ENCODE measurements at regions of chr15 and their contacts with region 1.

Region 1: GRCh38 chr15:22838292-22839042 is at the start of gene NIPA2:
- DNase-seq: peak; percentile 99
- H3K4me3 Mint-ChIP-seq: peak within 1 kb of the TSS; percentile 84
- H3K27ac Mint-ChIP-seq: peak within 1 kb of the TSS; percentile 82
- H3K4me1 Mint-ChIP-seq: peaks cover 28% of the 10 kb centered on the region
- H3K27me3 Mint-ChIP-seq: no peaks in the 10 kb centered on the region
- total RNA-seq, gene NIPA2: 47.1 to 49.9 TPM

Region 2: GRCh38 chr15:22786868-22787698 is 51.4 kb before region 1 on chr15:
- CTCF ChIA-PET with region 1: interaction called, 3 read pairs
- POLR2A ChIA-PET with region 1: interaction called, 22 read pairs
- DNase-seq: no peak
- H3K4me3 Mint-ChIP-seq: peak overlapping the region; percentile 79
- H3K27ac Mint-ChIP-seq: peak overlapping the region; percentile 65
- H3K4me1 Mint-ChIP-seq: peaks cover 35% of the 10 kb centered on the region
- H3K27me3 Mint-ChIP-seq: no peaks in the 10 kb centered on the region

Region 3: GRCh38 chr15:22795206-22796063 is 43.0 kb before region 1 on chr15:
- CTCF ChIA-PET with region 1: interaction called, 6 read pairs
- POLR2A ChIA-PET with region 1: interaction called, 13 read pairs
- DNase-seq: no peak
- H3K4me3 Mint-ChIP-seq: no peak overlapping the region
- H3K27ac Mint-ChIP-seq: no peak overlapping the region
- H3K4me1 Mint-ChIP-seq: peaks cover 54% of the 10 kb centered on the region
- H3K27me3 Mint-ChIP-seq: no peaks in the 10 kb centered on the region

Region 4: GRCh38 chr15:22949074-22949547 is 110.6 kb after region 1 on chr15:
- CTCF ChIA-PET with region 1: no interaction called
- POLR2A ChIA-PET with region 1: no interaction called
- DNase-seq: no peak
- H3K4me3 Mint-ChIP-seq: no peak overlapping the region
- H3K27ac Mint-ChIP-seq: no peak overlapping the region
- H3K4me1 Mint-ChIP-seq: peaks cover 15% of the 10 kb centered on the region
- H3K27me3 Mint-ChIP-seq: no peaks in the 10 kb centered on the region

Region 5: DNA sequence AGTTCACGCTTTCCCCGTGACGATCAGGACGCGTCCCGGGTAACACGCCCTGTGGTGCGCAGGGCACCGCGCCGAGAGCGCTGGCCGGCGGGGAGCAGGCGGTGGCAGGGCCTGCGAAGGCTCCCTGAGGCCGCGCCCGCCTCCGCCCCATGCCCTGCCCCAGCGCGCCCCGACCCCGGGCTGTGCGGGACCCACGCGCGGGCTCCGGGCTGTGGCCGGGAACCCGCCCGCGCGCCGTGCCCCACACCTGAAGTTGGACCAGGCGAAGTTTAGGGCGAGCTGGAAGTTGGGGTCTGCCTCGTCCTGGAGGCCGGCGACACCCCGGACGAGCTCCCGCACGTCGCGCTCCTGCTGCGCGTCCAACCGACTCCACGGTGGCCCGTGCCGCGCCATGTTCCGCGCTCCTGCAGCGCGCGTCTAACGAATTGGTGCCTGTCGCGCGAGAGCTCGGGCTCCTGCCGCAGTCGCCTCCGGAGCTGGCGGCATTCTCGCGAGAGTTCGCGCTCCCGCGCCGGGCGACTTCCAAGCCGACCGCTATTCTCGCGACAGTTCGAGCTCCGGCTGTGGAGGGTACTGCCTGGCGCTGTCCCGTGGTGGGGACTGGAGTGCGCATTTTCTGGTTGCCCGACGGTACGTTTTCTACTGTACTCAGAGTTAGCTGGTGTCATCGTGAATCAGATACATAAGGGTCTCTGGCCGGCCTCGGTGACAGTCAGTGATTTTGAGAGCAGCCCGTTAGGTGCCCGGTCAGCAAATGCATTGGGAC is 200.9 kb after region 1 on chr15 and contains the start of gene TUBGCP5:
- CTCF ChIA-PET with region 1: interaction called, 3 read pairs
- POLR2A ChIA-PET with region 1: interaction called, 15 read pairs
- DNase-seq: peak; percentile 99
- H3K4me3 Mint-ChIP-seq: peak within 1 kb of the TSS; percentile 97
- H3K27ac Mint-ChIP-seq: peak within 1 kb of the TSS; percentile 92
- H3K4me1 Mint-ChIP-seq: peaks cover 26% of the 10 kb centered on the region
- H3K27me3 Mint-ChIP-seq: no peaks in the 10 kb centered on the region
- total RNA-seq, gene TUBGCP5: 13.2 TPM